Naive thymus-derived CD4-positive, alpha-beta T cell (primary cell): ENCODE measurements at regions of chr11 and their contacts with region 1.

Region 1: DNA sequence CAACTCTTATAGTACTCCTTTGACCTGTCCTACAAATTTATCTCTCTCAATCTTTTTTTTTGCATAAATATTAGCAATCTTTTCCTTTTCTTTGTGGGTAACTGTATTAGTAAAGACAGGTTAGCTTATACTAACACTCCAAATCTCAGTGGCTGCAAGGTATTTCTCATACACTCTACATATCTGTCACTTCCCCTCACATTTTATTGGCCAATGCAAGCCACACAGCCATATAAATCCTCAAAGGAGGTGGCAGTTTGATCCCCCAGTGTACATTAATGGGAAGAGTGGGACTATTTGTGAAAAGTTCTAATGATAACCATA is 42.6 kb upstream of the EED start:
- DNase-seq: peak in 2 of 9 donors; percentile 7 to 17
- ATAC-seq: peak; percentile 71
- H3K4me3 ChIP-seq: peak overlapping the region; percentile 58
- H3K4me3 Mint-ChIP-seq: no peak overlapping the region
- H3K27ac ChIP-seq: peak overlapping the region; percentile 12
- H3K27ac Mint-ChIP-seq: no peak overlapping the region
- H3K4me1 ChIP-seq: peaks cover 4 to 11% of the 10 kb centered on the region in 2 donors
- H3K4me1 Mint-ChIP-seq: peaks cover 0 to 8% (median 0%) of the 10 kb centered on the region in 7 donors
- H3K27me3 ChIP-seq: no peaks in the 10 kb centered on the region
- H3K27me3 Mint-ChIP-seq: no peaks in the 10 kb centered on the region

Region 2: DNA sequence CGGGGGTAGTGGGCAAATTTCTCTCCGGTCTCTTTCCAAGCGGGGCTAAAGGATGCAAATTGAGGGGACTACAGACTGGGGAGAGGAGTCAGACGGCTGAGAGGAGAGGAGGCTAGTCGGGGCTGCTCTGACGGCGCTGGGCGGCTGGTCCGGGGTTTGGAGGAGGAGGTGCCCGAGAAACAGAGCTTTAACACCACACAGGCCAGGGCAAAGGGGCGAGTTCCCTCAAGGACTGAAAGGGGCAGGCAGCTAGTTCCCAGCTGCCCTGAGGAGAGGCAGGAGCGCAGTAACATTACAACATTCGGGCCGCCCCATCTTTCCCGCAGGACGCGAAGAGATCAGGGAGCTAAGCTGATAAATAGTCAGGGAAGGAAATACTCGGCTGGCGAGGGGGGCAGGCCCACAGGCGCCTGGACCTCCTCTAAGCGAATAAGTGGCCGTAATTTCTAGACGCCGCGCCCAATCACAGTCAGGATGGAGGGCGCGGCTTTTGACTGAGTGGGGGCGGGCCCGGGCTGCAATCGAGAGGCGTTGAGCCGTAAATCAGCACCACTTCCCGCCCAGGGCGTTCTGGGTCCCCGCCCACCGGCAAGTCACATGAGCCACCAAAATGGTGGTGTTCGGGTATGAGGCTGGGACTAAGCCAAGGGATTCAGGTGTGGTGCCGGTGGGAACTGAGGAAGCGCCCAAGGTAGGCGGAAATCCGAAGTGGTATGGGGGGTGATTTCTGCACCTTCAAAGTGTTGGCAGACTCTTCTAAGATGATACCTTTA is 573.8 kb before region 1 on chr11 and contains the start of gene TMEM126B:
- CTCF ChIA-PET with region 1: no interaction called
- POLR2A ChIA-PET with region 1: no interaction called
- intact Hi-C with region 1: loop called in 1 of 2 experiments (anchors 1 kb)
- DNase-seq: peak; percentile 85 to 95 (median 94)
- ATAC-seq: peak; percentile 99
- H3K4me3 ChIP-seq: peak within 1 kb of the TSS; percentile 98
- H3K4me3 Mint-ChIP-seq: peak within 1 kb of the TSS; percentile 84 to 98 (median 94)
- H3K27ac ChIP-seq: peak within 1 kb of the TSS; percentile 85
- H3K27ac Mint-ChIP-seq: peak within 1 kb of the TSS; percentile 89 to 97 (median 94)
- H3K4me1 ChIP-seq: peaks cover 13 to 22% of the 10 kb centered on the region in 2 donors
- H3K4me1 Mint-ChIP-seq: peaks cover 17 to 67% (median 48%) of the 10 kb centered on the region in 7 donors
- H3K27me3 ChIP-seq: no peaks in the 10 kb centered on the region
- H3K27me3 Mint-ChIP-seq: peaks cover 0 to 9% (median 0%) of the 10 kb centered on the region in 5 donors
- total RNA-seq, gene TMEM126B: 22.1 to 50.4 (median 36.4) TPM

Region 3: DNA sequence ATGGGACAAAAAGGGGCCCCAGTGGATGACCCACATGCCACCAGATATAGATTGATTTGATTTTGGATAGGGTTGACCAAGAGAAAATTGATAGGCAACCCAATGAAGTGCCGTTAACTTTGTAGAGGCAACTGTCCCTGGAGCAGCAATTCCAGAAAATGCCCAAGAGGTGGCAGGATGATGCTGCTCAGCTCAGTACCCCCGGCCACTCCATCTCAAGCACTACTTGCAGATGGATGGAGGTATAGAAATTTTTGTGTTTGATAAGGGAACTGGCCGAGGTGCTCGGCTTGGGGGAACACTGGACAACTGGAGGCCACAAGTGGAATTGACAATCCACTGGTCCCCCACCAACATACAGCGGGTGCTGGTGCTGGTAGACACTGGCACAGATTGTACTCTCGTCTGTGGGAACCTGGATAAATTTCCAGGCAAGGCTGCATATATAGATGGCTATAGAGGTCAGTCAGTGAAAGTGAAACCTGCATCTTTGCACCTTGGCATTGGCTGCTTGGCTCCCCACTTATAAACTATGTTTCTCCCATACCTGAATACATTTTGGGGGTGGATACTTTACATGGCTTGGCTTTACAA is 260.5 kb before region 1 on chr11:
- CTCF ChIA-PET with region 1: no interaction called
- POLR2A ChIA-PET with region 1: no interaction called
- intact Hi-C with region 1: loop called in 1 of 2 experiments (anchors 5 kb)
- DNase-seq: no peak
- ATAC-seq: peak; percentile 61
- H3K4me3 ChIP-seq: no peak overlapping the region
- H3K4me3 Mint-ChIP-seq: no peak overlapping the region
- H3K27ac ChIP-seq: no peak overlapping the region
- H3K27ac Mint-ChIP-seq: no peak overlapping the region
- H3K4me1 ChIP-seq: no peaks in the 10 kb centered on the region
- H3K4me1 Mint-ChIP-seq: peaks cover 0 to 10% (median 0%) of the 10 kb centered on the region in 7 donors
- H3K27me3 ChIP-seq: no peaks in the 10 kb centered on the region
- H3K27me3 Mint-ChIP-seq: no peaks in the 10 kb centered on the region

Region 4: GRCh38 chr11:86003654-86004053 is 198.3 kb before region 1 on chr11:
- CTCF ChIA-PET with region 1: no interaction called
- POLR2A ChIA-PET with region 1: interaction called, 10 read pairs
- intact Hi-C with region 1: no loop called
- DNase-seq: no peak
- ATAC-seq: no peak
- H3K4me3 ChIP-seq: no peak overlapping the region
- H3K4me3 Mint-ChIP-seq: no peak overlapping the region
- H3K27ac ChIP-seq: no peak overlapping the region
- H3K27ac Mint-ChIP-seq: no peak overlapping the region
- H3K4me1 ChIP-seq: no peaks in the 10 kb centered on the region
- H3K4me1 Mint-ChIP-seq: peaks cover 0 to 10% (median 0%) of the 10 kb centered on the region in 7 donors
- H3K27me3 ChIP-seq: no peaks in the 10 kb centered on the region
- H3K27me3 Mint-ChIP-seq: no peaks in the 10 kb centered on the region

Region 5: DNA sequence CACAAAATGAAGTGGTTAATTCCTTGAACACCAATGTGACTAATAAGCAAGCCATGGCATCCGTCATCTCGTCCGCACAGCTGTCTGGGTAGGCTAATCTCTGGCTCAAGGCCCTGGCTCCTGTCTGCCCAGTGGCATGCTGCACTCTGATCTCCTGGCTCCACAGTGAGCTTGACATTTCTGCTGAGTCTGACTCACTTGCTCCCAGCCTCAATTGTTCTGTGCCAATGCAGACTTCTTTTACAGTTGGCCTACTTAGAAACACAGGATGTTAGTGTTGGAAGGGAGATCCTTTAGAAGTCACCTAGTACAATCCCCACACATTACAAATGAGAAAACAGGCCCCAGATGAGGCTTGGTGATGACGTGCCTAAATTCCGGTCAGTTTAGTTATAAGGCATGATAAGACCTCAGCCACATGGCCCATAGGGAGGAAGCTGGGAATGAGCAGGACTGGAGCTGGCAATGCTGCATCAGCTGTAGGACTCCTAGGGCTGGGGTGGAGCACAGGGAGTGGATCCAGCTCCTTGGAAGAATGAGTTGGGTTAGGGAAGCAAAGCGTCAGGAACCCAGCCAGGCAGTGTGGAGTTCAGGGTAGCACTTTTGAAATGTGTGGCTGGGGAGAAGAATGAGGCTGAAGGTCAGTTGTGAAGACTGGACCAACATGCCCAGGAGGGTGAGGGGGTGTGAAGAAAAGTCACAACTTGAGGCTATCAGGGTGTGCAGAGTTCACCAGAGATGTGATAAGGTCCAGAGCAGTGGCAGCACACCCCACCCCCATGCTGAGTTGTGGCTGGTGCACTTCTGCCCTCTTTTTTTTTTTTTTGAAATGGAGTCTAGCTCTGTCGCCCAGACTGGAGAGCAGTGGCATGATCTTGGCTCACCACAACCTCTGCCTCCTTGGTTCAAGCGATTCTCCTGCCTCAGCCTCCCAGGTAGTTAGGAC is 27.6 kb before region 1 on chr11:
- CTCF ChIA-PET with region 1: no interaction called
- POLR2A ChIA-PET with region 1: no interaction called
- intact Hi-C with region 1: loop called in 1 of 2 experiments (anchors 1 kb)
- DNase-seq: no peak
- ATAC-seq: peak; percentile 56
- H3K4me3 ChIP-seq: no peak overlapping the region
- H3K4me3 Mint-ChIP-seq: no peak overlapping the region
- H3K27ac ChIP-seq: no peak overlapping the region
- H3K27ac Mint-ChIP-seq: no peak overlapping the region
- H3K4me1 ChIP-seq: no peaks in the 10 kb centered on the region
- H3K4me1 Mint-ChIP-seq: peaks cover 0 to 25% (median 0%) of the 10 kb centered on the region in 7 donors
- H3K27me3 ChIP-seq: no peaks in the 10 kb centered on the region
- H3K27me3 Mint-ChIP-seq: peaks cover 0 to 13% (median 7%) of the 10 kb centered on the region in 5 donors

Region 6: GRCh38 chr11:86218125-86219084 is 16.4 kb after region 1 on chr11:
- CTCF ChIA-PET with region 1: interaction called, 3 read pairs
- POLR2A ChIA-PET with region 1: no interaction called
- intact Hi-C with region 1: loop called in 1 of 2 experiments (anchors 1 kb)
- DNase-seq: peak in 8 of 9 donors; percentile 17 to 54 (median 42)
- ATAC-seq: peak; percentile 92
- H3K4me3 ChIP-seq: peak overlapping the region; percentile 32
- H3K4me3 Mint-ChIP-seq: peak overlapping the region; percentile 32 to 79 (median 67)
- H3K27ac ChIP-seq: no peak overlapping the region
- H3K27ac Mint-ChIP-seq: peak overlapping the region in 2 of 9 donors; percentile 44 to 45
- H3K4me1 ChIP-seq: no peaks in the 10 kb centered on the region
- H3K4me1 Mint-ChIP-seq: peaks cover 4 to 42% (median 12%) of the 10 kb centered on the region in 7 donors
- H3K27me3 ChIP-seq: no peaks in the 10 kb centered on the region
- H3K27me3 Mint-ChIP-seq: peaks cover 0 to 12% (median 5%) of the 10 kb centered on the region in 5 donors

Region 7: DNA sequence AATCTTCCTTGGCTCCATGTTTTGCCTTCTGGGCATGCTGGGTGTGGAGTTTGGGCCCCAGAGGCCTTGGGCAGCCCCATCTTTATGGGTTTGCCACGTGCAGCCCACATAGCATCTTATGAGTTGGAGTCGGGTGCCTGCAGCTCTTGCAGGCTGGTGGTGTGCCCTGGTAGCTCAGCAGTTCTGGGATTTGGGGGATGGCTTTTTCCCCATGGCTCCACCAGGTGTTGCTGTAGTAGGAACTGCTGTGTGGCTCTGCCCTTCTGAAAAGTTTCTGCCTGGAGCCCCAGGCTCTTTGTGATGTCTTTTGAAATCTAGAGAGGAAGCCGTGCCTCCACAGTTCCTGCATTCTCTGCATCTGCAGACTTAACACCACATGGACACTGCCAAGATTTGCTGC is 59.4 kb after region 1 on chr11:
- CTCF ChIA-PET with region 1: no interaction called
- POLR2A ChIA-PET with region 1: no interaction called
- intact Hi-C with region 1: no loop called
- DNase-seq: no peak
- ATAC-seq: no peak
- H3K4me3 ChIP-seq: no peak overlapping the region
- H3K4me3 Mint-ChIP-seq: no peak overlapping the region
- H3K27ac ChIP-seq: no peak overlapping the region
- H3K27ac Mint-ChIP-seq: no peak overlapping the region
- H3K4me1 ChIP-seq: peaks cover 0 to under 1% of the 10 kb centered on the region in 2 donors
- H3K4me1 Mint-ChIP-seq: peaks cover 0 to 18% (median 0%) of the 10 kb centered on the region in 7 donors
- H3K27me3 ChIP-seq: no peaks in the 10 kb centered on the region
- H3K27me3 Mint-ChIP-seq: no peaks in the 10 kb centered on the region

Region 8: DNA sequence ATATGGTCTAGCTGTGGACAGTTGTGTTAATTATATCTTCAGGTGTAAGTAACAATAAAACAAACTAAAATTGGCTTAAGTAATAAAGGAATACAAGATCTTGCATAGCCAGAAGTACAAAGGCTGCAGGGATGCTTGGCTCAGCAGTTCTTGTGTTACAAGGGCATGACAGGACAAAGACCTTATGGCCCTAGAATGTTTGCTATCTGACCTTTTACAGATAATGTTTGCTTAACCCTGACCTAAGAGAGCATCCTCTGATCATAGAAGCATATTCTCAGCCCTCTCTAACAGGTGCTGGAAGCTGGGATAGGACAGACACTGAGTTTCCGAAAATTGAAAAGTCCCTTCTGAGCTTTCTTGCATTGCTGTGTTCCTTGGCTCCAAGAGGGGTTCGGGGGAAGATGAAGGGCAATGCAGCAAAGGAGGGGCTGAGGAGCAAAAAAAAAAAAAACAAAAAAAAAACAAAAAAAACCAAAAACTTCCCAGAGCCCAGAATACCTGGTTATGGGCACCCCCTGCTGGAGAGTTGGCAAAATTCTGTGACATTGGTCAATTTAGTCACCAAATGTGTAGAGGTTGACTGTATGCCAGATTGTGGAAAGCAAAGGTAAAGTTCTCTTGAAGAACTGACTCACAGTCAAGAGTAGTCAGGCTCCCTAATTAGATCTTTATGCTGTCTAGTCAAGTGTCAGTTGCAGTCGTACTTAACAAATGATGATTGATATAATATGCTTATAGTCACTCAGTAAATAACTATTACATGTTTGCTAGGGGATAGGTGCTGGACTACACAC is 89.7 kb after region 1 on chr11:
- CTCF ChIA-PET with region 1: no interaction called
- POLR2A ChIA-PET with region 1: interaction called, 3 read pairs
- intact Hi-C with region 1: loop called in 1 of 2 experiments (anchors 5 kb)
- DNase-seq: peak; percentile 11 to 63 (median 49)
- ATAC-seq: peak; percentile 76
- H3K4me3 ChIP-seq: no peak overlapping the region
- H3K4me3 Mint-ChIP-seq: peak overlapping the region in 1 of 10 donors; percentile 23
- H3K27ac ChIP-seq: no peak overlapping the region
- H3K27ac Mint-ChIP-seq: peak overlapping the region in 1 of 9 donors; percentile 35
- H3K4me1 ChIP-seq: peaks cover 0 to 27% of the 10 kb centered on the region in 2 donors
- H3K4me1 Mint-ChIP-seq: peaks cover 5 to 47% (median 9%) of the 10 kb centered on the region in 7 donors
- H3K27me3 ChIP-seq: no peaks in the 10 kb centered on the region
- H3K27me3 Mint-ChIP-seq: no peaks in the 10 kb centered on the region